ENCODE measurements at regions of chr12 and their contacts with region 1.

Region 1: GRCh38 chr12:54279866-54280467 is at the start of gene CBX5:
- DNase-seq: peak; percentile 99 to 100 (median 100)
- ATAC-seq: peak; percentile 45
- H3K4me3 ChIP-seq: peak within 1 kb of the TSS; percentile 80
- H3K4me3 Mint-ChIP-seq: no peak within 1 kb of the TSS
- H3K27ac ChIP-seq: peak within 1 kb of the TSS; percentile 93 to 95
- H3K27ac Mint-ChIP-seq: no peak within 1 kb of the TSS
- H3K4me1 ChIP-seq: peaks cover 55% of the 10 kb centered on the region
- H3K4me1 Mint-ChIP-seq: peaks cover 31% of the 10 kb centered on the region
- H3K27me3 ChIP-seq: no peaks in the 10 kb centered on the region
- H3K27me3 Mint-ChIP-seq: no peaks in the 10 kb centered on the region
- CTCF ChIP-seq: no peak
- total RNA-seq, gene CBX5: 38.8 to 38.9 TPM

Region 2: GRCh38 chr12:54214553-54215406 is 65.2 kb before region 1 on chr12:
- CTCF ChIA-PET with region 1: interaction called, 3 read pairs
- POLR2A ChIA-PET with region 1: interaction called, 13 read pairs
- intact Hi-C with region 1: no loop called
- DNase-seq: peak; percentile 78 to 96 (median 86)
- ATAC-seq: peak; percentile 79
- H3K4me3 ChIP-seq: peak overlapping the region; percentile 53
- H3K4me3 Mint-ChIP-seq: peak overlapping the region; percentile 54
- H3K27ac ChIP-seq: no peak overlapping the region
- H3K27ac Mint-ChIP-seq: no peak overlapping the region
- H3K4me1 ChIP-seq: peaks cover 41% of the 10 kb centered on the region
- H3K4me1 Mint-ChIP-seq: peaks cover 46% of the 10 kb centered on the region
- H3K27me3 ChIP-seq: peaks cover 0 to 5% of the 10 kb centered on the region in 2 experiments
- H3K27me3 Mint-ChIP-seq: peaks cover 13% of the 10 kb centered on the region
- CTCF ChIP-seq: peak; percentile 99

Region 3: DNA sequence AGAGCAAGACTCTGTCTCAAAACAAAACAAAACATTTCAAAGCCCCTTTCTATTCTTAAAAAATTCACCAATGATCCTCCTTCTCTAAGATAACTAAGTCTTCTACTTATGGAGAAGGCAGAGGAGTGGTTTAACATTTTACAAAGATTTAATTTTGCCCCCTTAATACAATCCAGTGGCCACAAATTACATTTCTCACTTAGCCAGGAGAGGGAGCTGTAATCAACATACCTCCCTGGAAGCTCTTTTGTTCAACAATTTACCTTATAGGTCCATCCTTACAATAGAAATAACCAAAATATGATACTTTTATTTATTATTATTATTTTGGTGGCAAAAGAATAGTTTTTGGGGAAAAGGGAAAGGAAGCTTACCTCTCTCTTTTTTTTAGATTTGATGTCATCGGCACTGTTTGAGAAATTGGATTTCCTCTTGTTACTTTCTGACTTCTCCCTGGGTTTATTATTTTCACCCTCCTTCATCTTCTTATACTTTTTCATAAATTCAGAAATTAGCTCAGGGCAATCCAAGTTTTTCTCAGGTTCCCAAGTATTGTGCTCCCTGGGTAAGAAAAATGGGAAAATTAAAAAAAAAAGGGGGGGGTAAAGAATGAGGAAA is 28.2 kb before region 1 on chr12:
- CTCF ChIA-PET with region 1: interaction called, 3 read pairs
- POLR2A ChIA-PET with region 1: interaction called, 29 read pairs
- intact Hi-C with region 1: loop called in 1 of 2 experiments (anchors 2 kb)
- DNase-seq: peak in 5 of 14 experiments; percentile 3 to 69 (median 58)
- ATAC-seq: peak; percentile 69
- H3K4me3 ChIP-seq: no peak overlapping the region
- H3K4me3 Mint-ChIP-seq: no peak overlapping the region
- H3K27ac ChIP-seq: no peak overlapping the region
- H3K27ac Mint-ChIP-seq: no peak overlapping the region
- H3K4me1 ChIP-seq: no peaks in the 10 kb centered on the region
- H3K4me1 Mint-ChIP-seq: peaks cover 18% of the 10 kb centered on the region
- H3K27me3 ChIP-seq: no peaks in the 10 kb centered on the region
- H3K27me3 Mint-ChIP-seq: no peaks in the 10 kb centered on the region
- CTCF ChIP-seq: peak; percentile 74

Region 4: GRCh38 chr12:54294152-54294952 is 14.4 kb after region 1 on chr12:
- CTCF ChIA-PET with region 1: interaction called, 3 read pairs
- POLR2A ChIA-PET with region 1: interaction called, 54 read pairs
- intact Hi-C with region 1: no loop called
- DNase-seq: peak in 13 of 14 experiments; percentile 35 to 74 (median 53)
- ATAC-seq: peak; percentile 72
- H3K4me3 ChIP-seq: no peak overlapping the region
- H3K4me3 Mint-ChIP-seq: no peak overlapping the region
- H3K27ac ChIP-seq: no peak overlapping the region
- H3K27ac Mint-ChIP-seq: no peak overlapping the region
- H3K4me1 ChIP-seq: peaks cover 9% of the 10 kb centered on the region
- H3K4me1 Mint-ChIP-seq: peaks cover 6% of the 10 kb centered on the region
- H3K27me3 ChIP-seq: peaks cover 1 to 3% of the 10 kb centered on the region in 2 experiments
- H3K27me3 Mint-ChIP-seq: peaks cover 10% of the 10 kb centered on the region
- CTCF ChIP-seq: peak; percentile 71

Region 5: DNA sequence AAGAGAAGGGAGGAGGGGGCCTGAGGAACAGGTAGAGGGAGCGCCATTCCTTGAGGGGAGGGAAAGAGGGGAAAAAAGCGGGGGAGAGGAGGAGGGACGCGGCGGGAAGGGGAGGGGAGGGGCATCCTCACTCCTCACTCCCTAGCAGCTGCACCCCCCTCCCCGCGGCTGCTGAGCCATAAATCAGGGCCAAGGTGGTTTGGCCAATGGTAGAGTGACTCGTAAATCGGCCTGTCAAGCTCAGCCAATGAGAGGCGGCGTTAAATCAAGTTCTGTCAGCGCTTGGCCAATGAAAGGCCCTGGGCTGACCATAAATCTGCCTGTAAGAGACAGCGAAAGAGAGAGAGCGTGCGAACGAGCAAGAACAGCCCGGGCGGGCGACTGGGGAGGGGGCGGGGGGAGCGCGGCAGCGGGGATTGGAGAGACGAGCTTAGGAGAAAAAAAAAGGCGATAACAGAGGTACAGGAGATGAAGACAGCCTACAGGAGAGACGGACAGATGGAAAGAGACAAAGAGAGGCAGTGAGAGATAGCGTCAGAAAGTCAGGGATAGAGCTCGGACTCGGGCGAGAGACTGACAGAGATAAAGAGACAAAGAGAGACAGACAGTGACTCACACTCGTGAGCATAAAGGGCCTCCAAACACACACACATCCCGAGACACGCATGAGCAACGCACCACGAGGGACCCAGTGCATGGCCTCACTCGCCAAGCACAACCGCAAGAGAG is 79.2 kb after region 1 on chr12:
- CTCF ChIA-PET with region 1: interaction called, 3 read pairs
- POLR2A ChIA-PET with region 1: interaction called, 82 read pairs
- intact Hi-C with region 1: loop called in 1 of 2 experiments (anchors 2 kb)
- DNase-seq: peak; percentile 83 to 99 (median 88)
- ATAC-seq: peak; percentile 90
- H3K4me3 ChIP-seq: peak overlapping the region; percentile 78
- H3K4me3 Mint-ChIP-seq: no peak overlapping the region
- H3K27ac ChIP-seq: peak overlapping the region; percentile 85 to 93
- H3K27ac Mint-ChIP-seq: no peak overlapping the region
- H3K4me1 ChIP-seq: peaks cover 47% of the 10 kb centered on the region
- H3K4me1 Mint-ChIP-seq: peaks cover 11% of the 10 kb centered on the region
- H3K27me3 ChIP-seq: no peaks in the 10 kb centered on the region
- H3K27me3 Mint-ChIP-seq: no peaks in the 10 kb centered on the region
- CTCF ChIP-seq: no peak

Region 6: GRCh38 chr12:54497883-54498282 is 217.9 kb after region 1 on chr12:
- CTCF ChIA-PET with region 1: no interaction called
- POLR2A ChIA-PET with region 1: interaction called, 12 read pairs
- intact Hi-C with region 1: no loop called
- DNase-seq: no peak
- ATAC-seq: peak; percentile 1
- H3K4me3 ChIP-seq: peak overlapping the region; percentile 70
- H3K4me3 Mint-ChIP-seq: peak overlapping the region; percentile 97
- H3K27ac ChIP-seq: peak overlapping the region; percentile 46 to 65
- H3K27ac Mint-ChIP-seq: peak overlapping the region; percentile 92
- H3K4me1 ChIP-seq: peaks cover 31% of the 10 kb centered on the region
- H3K4me1 Mint-ChIP-seq: peaks cover 53% of the 10 kb centered on the region
- H3K27me3 ChIP-seq: no peaks in the 10 kb centered on the region
- H3K27me3 Mint-ChIP-seq: no peaks in the 10 kb centered on the region
- CTCF ChIP-seq: peak; percentile 8